Cardiac septum (tissue), 1 donor: ENCODE measurements at regions of chr1 and their contacts with region 1.

Region 1: GRCh38 chr1:112882271-112882744 is 73.7 kb downstream of the SLC16A1 start:
- DNase-seq: no peak

Region 2: GRCh38 chr1:112946683-112947082 is 64.4 kb after region 1 on chr1:
- intact Hi-C with region 1: no loop called
- DNase-seq: no peak

Region 3: DNA sequence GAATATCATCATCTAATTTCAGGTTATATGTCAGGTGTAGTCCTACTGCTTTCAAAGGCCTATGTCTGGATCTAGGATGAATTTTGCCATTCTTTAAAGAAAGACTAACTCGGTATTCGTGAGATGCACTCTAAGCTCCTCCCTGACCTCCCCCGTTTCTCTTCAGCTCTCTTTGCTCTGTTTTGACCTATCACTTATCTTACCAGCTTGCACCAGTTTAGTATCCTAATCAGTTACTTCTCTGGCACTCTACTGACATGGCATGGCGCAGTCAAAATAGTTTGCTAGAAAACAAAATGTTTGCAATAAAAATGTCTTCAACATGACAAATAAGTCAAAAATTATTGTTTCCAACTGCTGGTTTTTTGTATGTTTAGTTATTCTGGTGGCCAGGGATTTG is 82.0 kb after region 1 on chr1:
- intact Hi-C with region 1: no loop called
- DNase-seq: no peak

Region 4: DNA sequence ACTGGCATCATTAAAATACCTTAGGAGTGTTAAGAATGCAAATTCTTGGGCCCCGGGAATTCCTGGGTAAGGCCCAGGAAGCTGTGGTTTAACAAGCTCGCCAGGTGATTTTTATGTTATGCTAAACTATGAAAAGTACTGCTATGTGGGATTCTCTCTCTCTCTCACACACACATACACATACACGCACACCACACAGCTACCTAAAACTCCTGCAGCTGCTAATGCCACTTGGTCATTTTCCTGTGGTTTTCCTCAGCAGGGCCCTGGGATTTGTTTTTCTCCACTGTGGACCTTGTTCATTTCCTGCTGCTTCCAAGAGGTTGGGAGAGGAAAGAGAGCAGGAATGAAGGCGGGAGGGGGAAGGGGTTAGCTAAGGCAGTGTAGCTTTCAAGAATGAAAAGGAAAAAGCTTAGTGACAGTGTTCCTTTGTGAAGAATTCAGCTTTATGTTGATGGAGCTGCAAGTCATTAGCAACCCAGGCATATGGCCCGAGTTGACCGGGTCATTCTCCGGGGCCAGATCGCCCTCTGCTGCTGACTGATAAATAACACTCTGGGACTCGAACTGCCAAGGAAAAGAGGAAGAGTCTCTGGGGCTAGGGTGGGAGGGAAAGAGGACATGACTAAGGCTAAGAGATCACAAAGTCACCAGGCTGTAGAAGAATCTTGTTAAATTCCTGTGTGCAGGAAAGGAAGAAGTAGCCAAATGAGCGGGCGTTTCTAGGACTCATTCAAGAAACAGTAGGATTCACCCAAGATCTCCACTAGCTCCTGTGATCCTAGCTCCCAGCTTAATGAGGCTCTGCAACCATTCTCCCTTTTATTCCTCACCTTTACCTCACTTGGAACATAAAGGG is 160.2 kb after region 1 on chr1:
- intact Hi-C with region 1: loop called (anchors 2 kb)
- DNase-seq: peak; percentile 82